Heart left ventricle (tissue), 16 donors: ENCODE measurements at regions of chr20 and their contacts with region 1.

Region 1: GRCh38 chr20:57514273-57514751 is 10.6 kb downstream of the CTCFL start:
- DNase-seq: peak in 4 of 5 donors; percentile 54 to 75 (median 64)
- ATAC-seq: peak; percentile 63 to 91 (median 86)
- H3K4me3 ChIP-seq: no peak overlapping the region
- H3K27ac ChIP-seq: no peak overlapping the region
- H3K4me1 ChIP-seq: peaks cover 0 to 7% (median 0%) of the 10 kb centered on the region in 12 donors
- H3K27me3 ChIP-seq: peaks cover 0 to 17% (median 0%) of the 10 kb centered on the region in 9 donors
- CTCF ChIP-seq: peak; percentile 58 to 86 (median 76)
- POLR2A ChIP-seq: no peak

Region 2: DNA sequence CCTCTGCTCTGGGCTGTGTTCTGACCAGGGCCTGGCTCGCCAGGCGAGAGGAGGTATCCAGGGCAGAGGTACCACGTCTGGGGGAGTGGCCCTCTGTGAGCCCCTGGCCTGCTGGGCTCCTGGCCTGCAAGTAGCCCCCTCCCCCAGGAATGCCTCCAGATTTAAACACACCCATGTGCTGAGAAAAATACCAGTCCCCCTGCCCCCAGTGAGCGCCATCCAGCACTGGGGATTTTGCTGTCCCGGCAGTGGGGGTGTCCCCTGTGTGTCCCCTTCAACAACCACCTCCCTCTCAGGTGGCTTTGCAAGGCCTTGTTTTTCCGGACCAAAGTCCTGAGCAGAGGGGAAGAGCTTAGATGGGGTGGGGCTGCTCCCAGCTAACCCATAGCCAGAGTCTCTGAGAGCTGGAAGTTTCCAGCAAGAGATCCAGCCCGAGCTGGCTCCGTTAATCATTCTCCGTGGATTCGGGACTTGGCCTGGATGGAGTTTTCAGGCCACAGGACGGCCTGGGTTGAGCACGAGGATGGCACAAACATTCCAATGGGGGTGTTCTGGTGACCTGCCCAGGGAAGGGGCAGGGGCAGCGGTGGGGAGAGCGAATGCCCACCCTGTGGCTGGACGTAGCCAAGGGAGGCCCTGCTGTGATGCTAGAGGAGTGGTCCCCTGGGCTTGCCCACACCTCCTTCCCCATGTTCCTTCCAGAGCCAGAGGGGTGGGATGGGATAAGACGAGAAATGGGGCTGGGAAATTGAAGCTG is 75.6 kb after region 1 on chr20:
- intact Hi-C with region 1: loop called (anchors 1 to 2 kb)
- DNase-seq: peak in 1 of 5 donors; percentile 8
- ATAC-seq: no peak
- H3K4me3 ChIP-seq: no peak overlapping the region
- H3K27ac ChIP-seq: no peak overlapping the region
- H3K4me1 ChIP-seq: no peaks in the 10 kb centered on the region
- H3K27me3 ChIP-seq: peaks cover 0 to 10% (median 0%) of the 10 kb centered on the region in 9 donors
- CTCF ChIP-seq: no peak
- POLR2A ChIP-seq: no peak

Region 3: DNA sequence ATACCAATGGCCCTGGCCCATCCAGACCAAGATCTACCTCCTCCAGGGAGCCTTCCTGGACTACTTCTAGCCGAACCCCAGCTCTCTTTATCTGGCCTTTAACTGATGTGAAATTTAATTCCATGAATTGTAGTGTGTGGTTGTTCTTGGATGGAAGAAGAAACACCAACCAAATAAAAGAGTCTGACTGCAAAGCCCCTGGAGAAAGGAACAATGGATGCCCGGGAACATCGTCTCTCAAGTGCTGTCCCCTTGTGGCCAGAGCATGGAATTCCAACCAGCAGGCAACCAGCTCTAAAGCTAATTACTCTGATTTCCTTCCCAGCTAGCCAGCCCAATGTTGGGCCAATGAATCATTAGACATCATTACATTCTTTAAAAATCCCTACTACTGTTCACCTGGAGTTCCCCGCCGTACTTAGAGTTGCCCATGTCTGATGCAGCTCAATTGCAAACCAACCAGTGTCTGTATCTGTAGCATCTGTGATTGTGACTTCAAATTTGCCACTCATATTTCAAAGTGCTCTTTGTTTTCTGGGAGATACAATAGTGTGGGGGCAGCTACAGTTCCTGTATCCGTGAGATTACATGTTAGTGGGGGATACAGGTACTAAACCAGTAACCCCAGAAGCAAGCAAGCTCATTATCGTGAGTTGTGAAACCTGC is 573.0 kb after region 1 on chr20:
- intact Hi-C with region 1: loop called in 1 of 10 experiments (anchors 5 kb)
- DNase-seq: peak in 2 of 5 donors; percentile 38 to 47
- ATAC-seq: peak in 2 of 4 donors; percentile 26 to 72
- H3K4me3 ChIP-seq: no peak overlapping the region
- H3K27ac ChIP-seq: no peak overlapping the region
- H3K4me1 ChIP-seq: no peaks in the 10 kb centered on the region
- H3K27me3 ChIP-seq: peaks cover 0 to 7% (median 0%) of the 10 kb centered on the region in 9 donors
- CTCF ChIP-seq: peak; percentile 81 to 96 (median 88)
- POLR2A ChIP-seq: no peak

Region 4: DNA sequence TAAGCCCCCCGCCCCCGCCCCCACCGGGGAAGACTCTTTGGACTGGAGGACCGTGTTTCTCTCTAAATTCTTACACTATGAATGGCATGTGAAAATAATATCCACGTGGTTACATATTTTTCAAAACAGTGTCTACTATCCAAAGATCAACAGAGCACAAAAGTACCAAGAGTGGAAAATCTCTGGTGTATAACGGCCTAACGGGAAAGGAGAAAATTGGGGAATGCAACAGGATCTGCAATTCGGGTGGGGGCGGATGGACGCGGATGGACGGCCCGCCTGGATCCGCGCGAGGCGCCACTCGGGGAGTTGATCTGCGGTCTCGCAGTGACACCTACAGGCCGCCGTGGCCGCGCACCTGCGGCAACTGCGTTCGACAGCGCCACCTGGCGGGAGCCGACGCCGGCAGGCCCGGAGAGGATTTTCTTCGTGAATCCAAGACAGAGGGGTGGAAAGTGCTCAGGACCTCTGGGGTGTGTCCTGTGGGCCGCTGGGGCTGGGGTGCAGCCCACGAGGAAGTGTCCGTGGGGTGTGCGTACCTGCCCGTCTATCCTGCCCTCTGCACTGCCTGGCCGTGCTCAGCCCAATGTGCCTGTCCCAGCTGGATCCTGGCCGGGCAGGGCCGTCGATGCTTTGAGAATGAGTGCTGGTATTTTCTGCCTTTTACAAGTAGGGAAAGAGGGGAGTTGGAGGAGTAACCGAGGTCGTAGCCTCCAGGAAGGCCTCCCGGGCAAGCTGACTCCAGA is 695.5 kb after region 1 on chr20:
- intact Hi-C with region 1: loop called (anchors 1 to 5 kb)
- DNase-seq: peak; percentile 77 to 93 (median 85)
- ATAC-seq: peak; percentile 51 to 92 (median 86)
- H3K4me3 ChIP-seq: no peak overlapping the region
- H3K27ac ChIP-seq: no peak overlapping the region
- H3K4me1 ChIP-seq: peaks cover 0 to 6% (median 0%) of the 10 kb centered on the region in 12 donors
- H3K27me3 ChIP-seq: peaks cover 0 to 24% (median 7%) of the 10 kb centered on the region in 9 donors
- CTCF ChIP-seq: peak; percentile 100
- POLR2A ChIP-seq: no peak